ENCODE measurements at regions of chr9 and their contacts with region 1.

Region 1: GRCh38 chr9:133335878-133336811 is at the start of gene SURF6:
- DNase-seq: peak; percentile 94
- H3K4me3 Mint-ChIP-seq: peak within 1 kb of the TSS; percentile 96
- H3K27ac Mint-ChIP-seq: peak within 1 kb of the TSS; percentile 88
- H3K4me1 Mint-ChIP-seq: peaks cover 16% of the 10 kb centered on the region
- H3K27me3 Mint-ChIP-seq: no peaks in the 10 kb centered on the region
- total RNA-seq, gene SURF6: 29.0 and 29.8 TPM in 2 replicates

Region 2: GRCh38 chr9:132669698-132670456 is 666.3 kb before region 1 on chr9 and contains the start of gene DDX31:
- intact Hi-C with region 1: loop called (anchors 5 kb)
- DNase-seq: peak; percentile 84
- H3K4me3 Mint-ChIP-seq: peak within 1 kb of the TSS; percentile 96
- H3K27ac Mint-ChIP-seq: peak within 1 kb of the TSS; percentile 90
- H3K4me1 Mint-ChIP-seq: peaks cover 38% of the 10 kb centered on the region
- H3K27me3 Mint-ChIP-seq: no peaks in the 10 kb centered on the region
- total RNA-seq, gene DDX31: 32.1 and 34.1 TPM in 2 replicates

Region 3: DNA sequence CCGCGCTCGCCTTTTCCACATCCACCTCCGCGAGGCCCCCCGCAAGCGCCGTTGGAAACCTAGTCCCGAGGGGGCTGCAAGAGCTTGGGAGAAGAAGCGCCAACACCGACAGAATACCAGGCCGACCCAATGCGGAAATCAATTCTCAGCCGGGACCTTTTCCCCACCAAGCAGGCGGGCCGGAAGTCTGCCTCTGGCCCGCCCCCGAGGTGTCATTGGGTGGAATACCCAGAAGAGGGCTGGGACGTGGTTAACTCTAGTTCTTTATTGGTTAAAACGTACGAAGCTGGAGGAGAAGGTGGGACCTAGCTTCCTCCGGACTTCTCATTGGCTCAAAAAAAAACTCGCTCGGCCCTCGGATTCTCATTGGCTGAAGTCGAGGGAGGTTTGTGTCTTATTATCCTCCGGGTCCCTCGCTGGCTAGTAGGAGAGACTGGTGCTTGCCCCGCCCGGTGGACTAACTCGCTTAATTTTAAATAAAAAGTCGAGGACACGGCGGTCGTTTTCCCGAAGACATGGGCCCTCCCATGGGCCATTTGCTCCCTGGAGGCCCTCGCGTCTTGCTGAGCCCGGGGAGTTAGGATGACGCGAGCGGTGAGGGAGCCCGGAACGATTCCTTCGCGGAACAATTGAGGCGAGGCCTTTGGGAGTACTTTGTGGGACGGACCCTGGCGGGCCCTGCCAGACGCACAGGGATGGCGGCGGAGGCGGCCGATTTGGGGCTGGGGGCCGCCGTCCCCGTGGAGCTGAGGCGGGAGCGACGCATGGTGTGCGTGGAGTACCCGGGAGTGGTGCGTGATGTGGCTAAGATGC is 305.6 kb before region 1 on chr9 and contains the start of gene GTF3C5:
- intact Hi-C with region 1: loop called (anchors 1 kb)
- DNase-seq: peak; percentile 91
- H3K4me3 Mint-ChIP-seq: peak within 1 kb of the TSS; percentile 96
- H3K27ac Mint-ChIP-seq: peak within 1 kb of the TSS; percentile 97
- H3K4me1 Mint-ChIP-seq: peaks cover 47% of the 10 kb centered on the region
- H3K27me3 Mint-ChIP-seq: no peaks in the 10 kb centered on the region
- total RNA-seq, gene GTF3C5: 87.8 and 89.0 TPM in 2 replicates

Region 4: DNA sequence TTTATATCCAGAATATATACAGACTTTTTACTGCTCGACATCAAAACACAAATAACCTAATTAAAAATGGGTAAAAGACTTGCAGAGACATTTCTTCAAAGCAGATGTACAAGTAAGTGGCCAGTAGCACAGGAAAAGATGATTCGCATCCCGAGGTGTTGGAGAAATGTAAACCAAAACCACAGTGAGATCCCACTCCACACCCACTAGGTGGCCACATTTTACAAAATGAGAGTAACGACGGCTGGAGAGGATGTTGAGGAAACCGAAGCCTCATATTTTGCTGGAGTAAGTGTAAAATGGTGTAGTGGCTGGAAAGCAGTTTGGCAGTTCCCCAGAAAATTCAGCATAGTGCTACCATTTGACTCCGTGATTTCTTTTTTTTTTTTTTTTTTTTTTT is 151.2 kb before region 1 on chr9:
- intact Hi-C with region 1: loop called (anchors 2 kb)
- DNase-seq: peak; percentile 51
- H3K4me3 Mint-ChIP-seq: no peak overlapping the region
- H3K27ac Mint-ChIP-seq: peak overlapping the region; percentile 42
- H3K4me1 Mint-ChIP-seq: peaks cover 27% of the 10 kb centered on the region
- H3K27me3 Mint-ChIP-seq: peaks cover 40% of the 10 kb centered on the region

Region 5: DNA sequence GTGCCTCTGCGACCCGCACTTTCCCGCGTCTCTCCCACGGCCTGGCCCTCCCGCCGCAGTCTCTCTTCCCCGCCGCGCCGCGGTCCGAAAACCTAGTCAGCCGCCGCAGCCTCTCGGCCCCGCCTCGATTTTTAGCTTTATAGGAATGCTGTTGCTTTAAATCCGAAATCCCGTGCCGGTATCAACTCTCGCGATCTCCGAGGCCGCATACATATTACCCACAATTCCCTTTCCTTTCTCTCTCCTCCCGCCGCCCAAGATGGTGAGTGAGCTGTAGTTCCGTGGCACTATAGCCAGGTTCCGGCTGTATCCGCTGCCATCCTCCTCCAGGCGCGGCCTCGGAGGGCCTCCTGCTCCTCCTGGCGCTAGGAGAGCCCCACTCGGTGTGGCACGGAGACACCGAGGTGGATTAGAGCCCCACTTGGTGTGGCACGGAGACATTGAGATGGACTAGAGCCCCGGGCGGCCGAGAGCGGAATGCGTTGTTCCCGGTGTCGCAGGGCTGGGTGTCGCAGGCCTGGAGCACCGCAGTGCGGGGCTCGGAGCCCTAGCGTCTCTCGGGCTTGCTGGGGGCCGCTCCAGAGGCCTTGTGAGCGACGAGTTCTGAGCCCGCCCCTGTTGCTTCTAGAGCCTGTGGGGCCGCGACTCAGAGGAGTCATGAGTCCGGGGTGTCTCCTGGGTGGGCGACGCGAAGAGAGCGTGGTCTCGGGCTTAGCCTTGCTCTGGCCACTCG is 12.0 kb after region 1 on chr9 and contains the starts of genes MED22 and RPL7A:
- intact Hi-C with region 1: loop called (anchors 1 kb)
- DNase-seq: peak; percentile 90
- H3K4me3 Mint-ChIP-seq: peak within 1 kb of the TSS; percentile 93
- H3K27ac Mint-ChIP-seq: peak within 1 kb of the TSS; percentile 99
- H3K4me1 Mint-ChIP-seq: peaks cover 36% of the 10 kb centered on the region
- H3K27me3 Mint-ChIP-seq: peaks cover 2% of the 10 kb centered on the region
- total RNA-seq, gene MED22: 37.9 and 40.5 TPM in 2 replicates
- total RNA-seq, gene RPL7A: 2,401 and 2,463 TPM in 2 replicates

Region 6: GRCh38 chr9:133387425-133388079 is 51.4 kb after region 1 on chr9:
- intact Hi-C with region 1: no loop called
- DNase-seq: no peak
- H3K4me3 Mint-ChIP-seq: no peak overlapping the region
- H3K27ac Mint-ChIP-seq: no peak overlapping the region
- H3K4me1 Mint-ChIP-seq: no peaks in the 10 kb centered on the region
- H3K27me3 Mint-ChIP-seq: no peaks in the 10 kb centered on the region

Region 7: DNA sequence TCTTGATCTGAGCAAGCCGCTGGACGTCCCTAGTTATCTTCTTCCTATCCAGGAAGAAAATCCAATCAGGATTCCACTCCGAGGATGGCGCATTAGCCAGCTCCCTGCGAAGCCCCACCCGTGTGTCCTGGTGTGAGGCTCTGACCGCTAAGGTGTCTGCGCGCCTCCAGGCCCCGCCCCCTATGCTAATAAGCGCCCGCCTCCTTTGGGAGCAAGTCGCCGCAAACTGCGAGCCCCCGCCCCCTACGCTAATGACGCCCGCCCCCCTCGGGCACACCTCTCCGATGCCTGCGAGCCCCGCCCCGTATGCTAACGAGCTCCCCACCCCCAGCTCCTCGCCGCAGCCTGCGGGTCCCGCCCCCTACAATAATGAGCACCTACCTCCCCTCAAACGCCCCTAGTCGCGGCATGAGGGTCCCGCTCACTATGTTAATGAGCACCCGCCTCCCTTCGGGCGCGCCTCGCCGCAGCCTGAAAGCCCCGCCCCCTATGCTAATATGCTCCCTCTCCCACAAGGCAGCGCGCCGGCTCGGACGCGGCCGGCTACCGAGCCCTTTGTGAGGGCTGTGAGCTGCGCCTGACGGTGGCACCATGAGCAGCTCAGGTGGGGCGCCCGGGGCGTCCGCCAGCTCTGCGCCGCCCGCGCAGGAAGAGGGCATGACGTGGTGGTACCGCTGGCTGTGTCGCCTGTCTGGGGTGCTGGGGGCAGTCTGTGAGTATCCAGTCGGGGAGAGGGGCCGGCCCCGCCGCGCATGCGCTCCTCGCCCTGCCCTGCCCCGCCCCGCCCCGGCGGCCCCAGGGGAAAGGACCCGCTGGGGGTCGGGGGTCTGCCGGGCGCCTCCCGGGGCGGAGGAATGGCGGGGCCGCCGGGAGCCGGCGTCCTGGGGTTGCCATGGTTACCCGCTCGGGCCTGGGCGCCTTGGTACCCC is 123.6 kb after region 1 on chr9 and contains the start of gene CACFD1:
- intact Hi-C with region 1: loop called (anchors 1 kb)
- DNase-seq: peak; percentile 80
- H3K4me3 Mint-ChIP-seq: peak within 1 kb of the TSS; percentile 86
- H3K27ac Mint-ChIP-seq: peak within 1 kb of the TSS; percentile 77
- H3K4me1 Mint-ChIP-seq: no peaks in the 10 kb centered on the region
- H3K27me3 Mint-ChIP-seq: peaks cover 11% of the 10 kb centered on the region
- total RNA-seq, gene CACFD1: 1.0 and 1.1 TPM in 2 replicates

Measured in activated T-helper 1 cell treated with anti-CD3 and anti-CD28 coated beads, Interleukin-12 subunit alpha, Interleukin-12 subunit beta, Interleukin-2, Interleukin-4 antibody, amounts not matched to agents 30 ng/mL and 10 ng/mL and 1 ng/mL, durations not matched to agents 14 hours and 24 hours and 36 hours (primary cell).